Left ventricle myocardium superior (tissue), 1 donor: ENCODE measurements at regions of chr7 and their contacts with region 1.

Region 1: GRCh38 chr7:92621026-92621540 is 30.9 kb upstream of the FAM133B start:
- DNase-seq: no peak
- ATAC-seq: peak; percentile 87

Region 2: DNA sequence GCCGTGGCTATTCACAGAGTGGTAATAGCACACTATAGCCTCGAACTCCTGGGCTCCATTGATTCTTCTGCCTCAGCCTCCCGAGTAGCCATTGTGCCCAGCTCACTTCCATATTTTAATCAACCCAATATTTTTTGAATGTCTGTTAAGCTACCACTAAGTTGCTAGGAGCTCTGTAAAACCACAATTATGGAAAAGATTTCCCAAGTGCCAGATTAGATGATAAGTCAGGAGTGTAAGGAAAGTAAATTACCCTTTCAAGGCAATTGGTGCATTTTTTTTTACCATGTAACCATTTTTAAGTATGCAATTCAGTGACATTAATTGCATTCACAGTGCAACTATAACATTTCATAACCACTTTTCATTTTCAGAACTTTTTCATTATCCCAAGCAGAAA is 261.3 kb before region 1 on chr7:
- intact Hi-C with region 1: no loop called
- DNase-seq: no peak
- ATAC-seq: no peak

Region 3: GRCh38 chr7:92682903-92683539 is 61.9 kb after region 1 on chr7:
- intact Hi-C with region 1: no loop called
- DNase-seq: no peak
- ATAC-seq: no peak

Region 4: GRCh38 chr7:92833024-92833765 is 212.1 kb after region 1 on chr7:
- intact Hi-C with region 1: loop called (anchors 5 kb)
- DNase-seq: peak; percentile 93
- ATAC-seq: peak; percentile 84

Region 5: DNA sequence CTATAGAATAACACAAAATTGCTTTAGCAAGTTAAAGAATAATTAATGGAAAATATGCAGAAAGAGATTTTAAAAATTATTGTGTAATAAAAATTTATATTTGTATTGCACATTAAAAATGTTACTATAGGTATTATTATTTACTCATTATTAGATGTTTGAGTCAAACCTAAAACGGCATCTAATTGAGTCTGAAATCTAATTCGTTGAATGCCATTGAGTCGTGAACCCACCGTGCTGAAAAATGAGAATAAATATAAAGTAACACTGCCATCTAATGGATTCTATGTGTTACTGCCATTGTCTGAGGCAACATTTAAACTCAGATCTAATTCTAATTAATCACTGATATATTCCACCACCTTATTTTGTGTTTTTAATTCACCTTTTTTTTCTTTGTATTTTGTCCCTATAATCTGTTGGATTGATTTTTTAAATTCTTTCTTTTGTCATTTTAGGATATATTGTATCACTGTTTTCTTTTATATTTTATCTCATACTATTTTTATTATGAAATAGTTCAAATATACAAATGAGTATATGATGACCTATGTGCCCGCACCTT is 434.5 kb after region 1 on chr7:
- intact Hi-C with region 1: loop called (anchors 5 kb)
- DNase-seq: no peak
- ATAC-seq: no peak